ENCODE measurements at regions of chr18 and their contacts with region 1.

Region 1: GRCh38 chr18:4293337-4293736 is 161.8 kb downstream of the DLGAP1 start:
- DNase-seq: no peak
- H3K4me3 ChIP-seq: no peak overlapping the region
- H3K27ac ChIP-seq: no peak overlapping the region
- H3K4me1 ChIP-seq: no peaks in the 10 kb centered on the region
- H3K27me3 ChIP-seq: peaks cover 9% of the 10 kb centered on the region; the same call in 1 of the 2 replicates
- CTCF ChIP-seq: no peak

Region 2: GRCh38 chr18:4248686-4249085 is 44.7 kb before region 1 on chr18:
- CTCF ChIA-PET with region 1: interaction called, 12 read pairs
- POLR2A ChIA-PET with region 1: no interaction called
- intact Hi-C with region 1: no loop called
- DNase-seq: no peak
- H3K4me3 ChIP-seq: no peak overlapping the region
- H3K27ac ChIP-seq: no peak overlapping the region
- H3K4me1 ChIP-seq: no peaks in the 10 kb centered on the region
- H3K27me3 ChIP-seq: peaks cover 55% of the 10 kb centered on the region
- CTCF ChIP-seq: no peak

Region 3: DNA sequence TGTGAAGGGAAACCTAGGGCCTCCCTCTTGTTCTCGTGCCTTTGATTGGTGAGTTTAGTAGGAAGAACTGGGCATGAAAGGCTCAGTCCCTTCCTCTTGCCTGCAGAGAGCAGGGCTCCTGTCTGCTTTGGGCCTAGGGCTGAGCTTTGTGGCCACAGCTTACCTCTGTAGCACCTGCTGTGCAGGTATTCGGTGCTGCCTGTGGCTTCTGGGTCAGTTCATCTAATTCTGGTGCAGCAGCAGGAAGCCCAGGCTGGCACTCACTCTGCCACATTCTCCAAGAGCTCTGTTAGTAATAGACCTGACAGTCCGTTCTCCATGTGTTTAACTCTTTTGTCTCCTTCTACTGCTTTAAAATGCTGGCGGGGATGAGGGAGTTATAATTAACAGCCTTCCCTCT is 65.3 kb after region 1 on chr18:
- CTCF ChIA-PET with region 1: no interaction called
- POLR2A ChIA-PET with region 1: no interaction called
- intact Hi-C with region 1: no loop called
- DNase-seq: no peak
- H3K4me3 ChIP-seq: no peak overlapping the region
- H3K27ac ChIP-seq: no peak overlapping the region
- H3K4me1 ChIP-seq: no peaks in the 10 kb centered on the region
- H3K27me3 ChIP-seq: peaks cover 33% of the 10 kb centered on the region
- CTCF ChIP-seq: no peak